PC-9 (cell line): ENCODE measurements at regions of chr6 and their contacts with region 1.

Region 1: DNA sequence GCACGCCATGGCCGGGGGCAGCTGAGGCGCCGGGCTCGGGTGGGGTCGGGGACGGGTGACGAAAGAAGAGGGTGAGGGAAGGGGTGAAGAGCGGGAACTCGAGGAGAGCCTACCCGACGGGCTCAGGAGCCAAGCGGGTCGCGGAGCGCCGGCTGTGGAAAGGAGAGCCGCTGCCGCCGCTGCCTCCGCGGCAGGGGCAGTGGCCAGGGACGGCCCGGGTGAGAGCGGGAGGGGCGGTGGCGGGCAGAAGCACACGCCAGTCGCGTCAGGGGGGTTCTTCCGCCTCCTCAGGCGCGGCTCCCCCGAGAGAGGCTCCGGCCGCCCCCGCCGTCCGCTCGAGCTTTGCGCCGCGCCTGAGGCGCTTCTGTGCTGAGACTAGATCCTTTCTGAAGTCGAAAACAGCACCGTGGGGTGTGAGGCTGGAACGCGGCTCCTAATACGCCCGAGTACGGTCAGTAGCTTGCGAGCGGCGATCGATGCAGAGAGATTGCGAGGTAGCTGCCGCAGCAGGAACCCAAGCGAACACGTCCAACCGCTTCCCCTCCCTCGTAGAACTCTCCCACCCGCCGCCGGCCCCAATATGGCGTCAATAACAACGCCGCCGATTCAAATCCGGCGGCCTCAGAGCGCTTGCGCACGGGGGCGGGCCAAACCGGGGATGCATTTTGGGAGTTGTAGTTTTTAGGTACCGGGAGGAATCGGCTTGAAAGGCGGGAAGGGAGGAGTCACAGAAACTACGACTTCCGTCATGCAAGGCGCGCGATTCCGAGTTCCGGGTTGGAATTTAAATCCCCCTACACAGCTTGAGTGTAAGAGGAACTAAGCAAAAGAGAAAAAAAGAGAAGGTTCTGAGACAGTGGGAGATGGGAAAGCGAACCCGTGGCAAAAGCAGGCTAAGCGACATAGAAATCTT is at the start of gene AKIRIN2:
- DNase-seq: peak; percentile 91 to 96
- H3K4me3 ChIP-seq: peak within 1 kb of the TSS; percentile 96
- H3K27ac ChIP-seq: peak within 1 kb of the TSS; percentile 86
- H3K4me1 ChIP-seq: peaks cover 30% of the 10 kb centered on the region
- H3K27me3 ChIP-seq: no peaks in the 10 kb centered on the region
- CTCF ChIP-seq: no peak
- total RNA-seq, gene AKIRIN2: 34.7 and 48.3 TPM in 2 replicates

Region 2: GRCh38 chr6:87472525-87473418 is 229.2 kb before region 1 on chr6 and contains the start of gene SLC35A1:
- CTCF ChIA-PET with region 1: no interaction called
- POLR2A ChIA-PET with region 1: no interaction called
- intact Hi-C with region 1: loop called (anchors 5 kb)
- DNase-seq: peak; percentile 49 to 82
- H3K4me3 ChIP-seq: peak within 1 kb of the TSS; percentile 86
- H3K27ac ChIP-seq: 0 out of 2 replicates have a peak within 1 kb of the TSS, but pooled peaks have one; percentile 32
- H3K4me1 ChIP-seq: peaks cover 8% of the 10 kb centered on the region
- H3K27me3 ChIP-seq: no peaks in the 10 kb centered on the region
- CTCF ChIP-seq: peak; percentile 33; the same call in 1 of the 2 replicates
- total RNA-seq, gene SLC35A1: 6.7 and 9.3 TPM in 2 replicates

Region 3: GRCh38 chr6:87653074-87653962 is 48.6 kb before region 1 on chr6:
- CTCF ChIA-PET with region 1: no interaction called
- POLR2A ChIA-PET with region 1: no interaction called
- intact Hi-C with region 1: no loop called
- DNase-seq: no peak
- H3K4me3 ChIP-seq: no peak overlapping the region
- H3K27ac ChIP-seq: no peak overlapping the region
- H3K4me1 ChIP-seq: no peaks in the 10 kb centered on the region
- H3K27me3 ChIP-seq: no peaks in the 10 kb centered on the region
- CTCF ChIP-seq: no peak

Region 4: DNA sequence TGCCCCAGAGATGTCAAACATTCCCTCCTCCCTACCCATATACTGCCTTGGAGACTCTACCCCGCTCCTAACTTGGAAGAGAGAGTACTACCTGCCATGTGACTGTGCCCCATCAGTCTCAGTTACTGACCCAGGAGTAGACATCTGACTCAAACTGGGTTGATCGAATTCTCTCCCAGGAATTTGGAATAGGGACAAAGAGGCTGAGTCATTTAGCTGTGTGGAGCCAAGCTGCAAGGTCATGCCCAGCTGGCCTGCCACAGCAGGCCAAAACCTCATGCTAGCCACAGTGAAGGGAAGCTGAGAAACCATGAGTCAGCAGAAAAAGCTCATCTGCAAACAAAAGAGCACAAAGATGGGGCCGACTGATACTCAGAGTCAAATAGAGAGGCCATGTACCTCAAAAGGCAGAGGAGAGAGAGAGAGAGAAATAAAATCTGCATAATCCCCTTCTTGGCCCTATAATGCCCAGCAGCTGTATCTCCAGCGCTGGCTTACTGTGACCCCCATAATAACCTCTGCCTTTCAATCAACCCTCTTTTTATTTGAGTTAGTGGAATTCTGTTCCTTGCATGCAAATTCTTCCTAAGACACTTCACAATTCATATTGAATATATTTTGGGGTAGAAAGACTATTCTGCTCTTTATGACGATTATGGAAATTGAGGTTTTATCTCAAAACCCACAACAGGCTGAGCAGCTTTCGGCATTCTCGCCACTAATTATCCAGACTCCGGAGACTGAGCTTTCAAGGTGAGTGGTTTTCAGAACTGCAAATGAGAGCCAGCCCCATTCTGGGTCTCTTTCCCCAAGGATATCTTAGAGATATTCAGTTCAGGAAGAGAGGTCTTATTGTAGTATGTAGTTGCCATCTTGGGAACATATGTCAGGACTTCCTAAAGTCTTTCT is 21.5 kb after region 1 on chr6:
- CTCF ChIA-PET with region 1: no interaction called
- POLR2A ChIA-PET with region 1: interaction called, 12 read pairs
- intact Hi-C with region 1: loop called (anchors 1 kb)
- DNase-seq: peak; percentile 78 to 91
- H3K4me3 ChIP-seq: no peak overlapping the region
- H3K27ac ChIP-seq: peak overlapping the region; percentile 74
- H3K4me1 ChIP-seq: peaks cover 36% of the 10 kb centered on the region
- H3K27me3 ChIP-seq: no peaks in the 10 kb centered on the region
- CTCF ChIP-seq: no peak

Region 5: DNA sequence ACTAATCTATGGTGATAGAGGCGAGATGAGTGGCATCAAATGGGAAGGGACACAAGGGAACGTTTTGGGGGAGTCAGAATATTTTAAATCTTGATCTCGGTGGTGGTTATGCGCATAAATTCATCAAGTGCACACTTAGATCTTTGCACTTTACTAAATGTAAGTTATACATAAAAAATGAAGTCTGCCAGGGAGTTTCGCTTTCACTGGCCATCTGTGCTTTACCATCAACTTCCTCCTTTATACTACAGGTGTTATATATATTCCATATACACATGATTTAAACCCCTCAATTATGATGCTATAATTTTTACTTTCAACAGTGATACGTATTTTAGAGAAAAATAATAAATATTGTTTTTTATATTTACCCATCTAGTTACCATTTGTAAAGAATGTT is 97.7 kb after region 1 on chr6:
- CTCF ChIA-PET with region 1: no interaction called
- POLR2A ChIA-PET with region 1: no interaction called
- intact Hi-C with region 1: loop called (anchors 5 kb)
- DNase-seq: no peak
- H3K4me3 ChIP-seq: no peak overlapping the region
- H3K27ac ChIP-seq: no peak overlapping the region
- H3K4me1 ChIP-seq: no peaks in the 10 kb centered on the region
- H3K27me3 ChIP-seq: no peaks in the 10 kb centered on the region
- CTCF ChIP-seq: no peak

Region 6: GRCh38 chr6:87944541-87944954 is 242.6 kb after region 1 on chr6:
- CTCF ChIA-PET with region 1: no interaction called
- POLR2A ChIA-PET with region 1: no interaction called
- intact Hi-C with region 1: loop called (anchors 5 kb)
- DNase-seq: peak; percentile 55 to 84
- H3K4me3 ChIP-seq: no peak overlapping the region
- H3K27ac ChIP-seq: peak overlapping the region; percentile 25
- H3K4me1 ChIP-seq: peaks cover 4% of the 10 kb centered on the region; the same call in 1 of the 2 replicates
- H3K27me3 ChIP-seq: no peaks in the 10 kb centered on the region
- CTCF ChIP-seq: no peak; the same call in 1 of the 2 replicates